CD4-positive, alpha-beta memory T cell (primary cell): ENCODE measurements at regions of chr12 and their contacts with region 1.

Region 1: GRCh38 chr12:110698171-110698902 is 9.4 kb upstream of the HVCN1 start:
- DNase-seq: peak; percentile 75 to 80 (median 78)
- H3K4me3 ChIP-seq: no peak overlapping the region
- H3K4me3 Mint-ChIP-seq: peak overlapping the region in 2 of 8 donors; percentile 46 to 48
- H3K27ac ChIP-seq: no peak overlapping the region
- H3K27ac Mint-ChIP-seq: peak overlapping the region in 4 of 7 donors; percentile 45 to 90 (median 64)
- H3K4me1 ChIP-seq: peaks cover 9% of the 10 kb centered on the region
- H3K4me1 Mint-ChIP-seq: peaks cover 4 to 11% (median 6%) of the 10 kb centered on the region in 4 donors
- H3K27me3 ChIP-seq: no peaks in the 10 kb centered on the region
- H3K27me3 Mint-ChIP-seq: no peaks in the 10 kb centered on the region

Region 2: DNA sequence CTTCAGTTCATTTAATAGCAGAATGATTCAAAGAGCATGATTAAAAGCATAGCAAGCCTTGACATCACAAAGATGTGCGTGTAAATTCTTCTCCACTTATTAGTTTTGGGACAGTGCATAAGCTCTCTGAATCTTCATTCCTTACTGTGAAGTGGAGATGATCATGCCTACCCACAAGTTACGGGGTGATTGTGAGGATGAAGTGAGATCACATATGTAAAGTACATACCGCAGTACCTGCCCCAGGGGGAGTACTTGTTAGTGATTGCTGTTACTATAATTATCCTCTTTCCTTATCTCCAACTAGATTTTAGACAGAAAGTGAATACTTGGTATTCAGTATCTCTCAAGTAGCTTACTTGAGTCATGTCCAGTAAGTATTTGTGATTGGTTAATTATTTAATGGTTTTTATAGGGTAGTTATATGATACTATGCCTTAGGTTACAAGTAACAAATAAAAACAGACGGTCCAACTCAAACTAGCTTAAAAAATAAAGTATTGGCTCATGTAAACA is 190.2 kb before region 1 on chr12:
- CTCF ChIA-PET with region 1: interaction called, 3 read pairs
- POLR2A ChIA-PET with region 1: no interaction called
- intact Hi-C with region 1: loop called (anchors 1 kb)
- DNase-seq: no peak
- H3K4me3 ChIP-seq: no peak overlapping the region
- H3K4me3 Mint-ChIP-seq: no peak overlapping the region
- H3K27ac ChIP-seq: no peak overlapping the region
- H3K27ac Mint-ChIP-seq: no peak overlapping the region
- H3K4me1 ChIP-seq: no peaks in the 10 kb centered on the region
- H3K4me1 Mint-ChIP-seq: no peaks in the 10 kb centered on the region
- H3K27me3 ChIP-seq: no peaks in the 10 kb centered on the region
- H3K27me3 Mint-ChIP-seq: no peaks in the 10 kb centered on the region

Region 3: DNA sequence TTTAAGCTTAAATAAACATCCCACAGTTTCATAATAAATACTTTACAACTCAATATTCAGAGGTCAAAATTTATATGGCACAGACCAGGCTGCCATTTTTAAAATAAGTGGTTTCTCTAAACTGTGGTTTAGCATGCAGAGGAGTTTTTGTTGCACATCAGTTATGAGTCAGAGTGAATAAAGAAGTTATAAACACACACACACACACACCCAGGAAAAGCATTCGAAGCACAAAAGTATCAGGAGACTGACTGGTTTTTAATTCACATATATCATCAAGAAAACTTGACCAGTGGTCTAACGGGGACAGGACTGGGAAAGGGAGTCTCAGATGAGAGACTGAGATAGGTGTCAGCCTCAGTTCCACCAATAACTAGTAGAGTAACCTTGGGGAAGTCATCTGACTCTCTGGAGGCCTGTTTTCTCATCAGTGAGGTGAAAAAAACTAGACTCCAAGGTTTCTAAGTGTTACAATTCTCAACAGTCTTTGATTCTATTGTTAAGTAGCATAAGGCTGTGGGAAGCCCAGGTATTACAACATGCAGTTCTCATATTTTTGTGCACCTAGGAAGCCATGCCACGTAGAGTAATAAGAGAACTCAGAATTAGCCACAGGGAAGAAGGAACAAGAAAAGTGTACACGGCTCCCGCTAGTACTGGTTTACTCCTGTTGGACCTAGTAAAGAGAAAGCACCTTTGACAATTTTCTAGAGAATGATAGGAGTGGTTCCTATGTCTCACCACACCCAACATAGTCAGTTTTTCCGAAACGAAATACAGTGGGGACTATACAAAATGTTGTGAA is 120.4 kb before region 1 on chr12:
- CTCF ChIA-PET with region 1: no interaction called
- POLR2A ChIA-PET with region 1: no interaction called
- intact Hi-C with region 1: no loop called
- DNase-seq: peak in 4 of 5 donors; percentile 36 to 86 (median 38)
- H3K4me3 ChIP-seq: peak overlapping the region; percentile 2 to 25
- H3K4me3 Mint-ChIP-seq: peak overlapping the region; percentile 58 to 97 (median 78)
- H3K27ac ChIP-seq: peak overlapping the region; percentile 66
- H3K27ac Mint-ChIP-seq: peak overlapping the region; percentile 69 to 96 (median 92)
- H3K4me1 ChIP-seq: peaks cover 80% of the 10 kb centered on the region
- H3K4me1 Mint-ChIP-seq: peaks cover 50 to 82% (median 68%) of the 10 kb centered on the region in 4 donors
- H3K27me3 ChIP-seq: no peaks in the 10 kb centered on the region
- H3K27me3 Mint-ChIP-seq: no peaks in the 10 kb centered on the region

Region 4: DNA sequence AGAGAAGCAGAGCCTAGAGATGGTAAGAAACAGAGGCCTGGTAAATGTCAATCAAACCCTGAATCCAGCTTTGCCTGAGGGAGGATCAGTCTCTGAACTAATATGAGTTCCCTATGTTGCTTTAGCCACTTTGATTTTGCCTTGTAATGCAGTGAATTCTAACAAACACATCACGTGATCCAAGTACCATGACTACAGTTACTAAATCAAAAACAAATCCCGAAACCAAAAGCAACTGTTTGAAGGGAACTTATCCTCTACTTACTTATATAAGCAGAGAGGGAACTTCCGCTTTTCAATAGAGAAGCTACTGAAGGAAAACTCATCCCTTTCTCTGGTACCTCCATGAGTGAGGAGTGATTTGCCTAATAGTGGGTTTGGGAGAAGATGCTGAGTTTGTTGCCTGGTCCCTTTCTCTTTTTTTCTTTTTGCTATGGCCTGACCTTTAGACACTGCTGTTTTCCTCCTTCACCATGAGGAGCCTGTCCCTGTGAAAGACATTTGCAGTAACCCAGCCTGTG is 107.5 kb before region 1 on chr12:
- CTCF ChIA-PET with region 1: no interaction called
- POLR2A ChIA-PET with region 1: no interaction called
- intact Hi-C with region 1: no loop called
- DNase-seq: peak in 4 of 5 donors; percentile 64 to 81 (median 74)
- H3K4me3 ChIP-seq: peak overlapping the region in 1 of 2 donors; percentile 16
- H3K4me3 Mint-ChIP-seq: peak overlapping the region in 7 of 8 donors; percentile 7 to 74 (median 66)
- H3K27ac ChIP-seq: peak overlapping the region; percentile 60
- H3K27ac Mint-ChIP-seq: peak overlapping the region; percentile 95 to 98 (median 97)
- H3K4me1 ChIP-seq: peaks cover 22% of the 10 kb centered on the region
- H3K4me1 Mint-ChIP-seq: peaks cover 17 to 32% (median 27%) of the 10 kb centered on the region in 4 donors
- H3K27me3 ChIP-seq: no peaks in the 10 kb centered on the region
- H3K27me3 Mint-ChIP-seq: no peaks in the 10 kb centered on the region